Posterior vena cava (tissue), 2 donors: ENCODE measurements at regions of chr1 and their contacts with region 1.

Region 1: GRCh38 chr1:19582302-19582701 is 61.8 kb upstream of the NBL1 start:
- DNase-seq: no peak

Region 2: GRCh38 chr1:19373211-19374082 is 208.9 kb before region 1 on chr1:
- intact Hi-C with region 1: loop called in 1 of 2 experiments (anchors 1 kb)
- DNase-seq: no peak

Region 3: DNA sequence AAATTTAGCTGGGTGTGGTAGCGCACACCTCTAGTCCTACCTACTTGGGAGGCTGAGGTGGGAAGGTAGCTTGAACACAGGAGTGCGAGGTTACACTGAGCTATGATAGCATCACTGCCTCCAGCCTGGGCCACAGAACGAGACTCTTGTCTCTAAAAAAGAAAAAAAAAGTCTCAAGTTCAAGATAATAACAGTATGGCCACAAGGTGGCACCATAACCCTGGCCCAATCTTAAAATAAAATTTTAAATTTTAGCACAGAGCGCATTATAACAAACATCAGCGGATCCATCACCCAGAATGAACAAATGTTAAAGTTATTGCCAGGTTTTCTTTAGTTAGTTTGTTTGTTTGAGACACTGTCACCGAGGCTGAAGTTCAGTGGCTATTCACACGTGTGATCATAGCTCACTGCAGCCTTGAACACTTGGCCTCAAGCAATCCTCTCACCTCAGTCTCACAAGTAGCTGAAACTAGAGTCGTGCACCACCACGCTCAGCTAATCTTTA is 79.5 kb after region 1 on chr1:
- intact Hi-C with region 1: no loop called
- DNase-seq: no peak